Activated CD8-positive, alpha-beta T cell treated with anti-CD3 and anti-CD28 coated beads for 36 hours (primary cell): ENCODE measurements at regions of chr18 and their contacts with region 1.

Region 1: DNA sequence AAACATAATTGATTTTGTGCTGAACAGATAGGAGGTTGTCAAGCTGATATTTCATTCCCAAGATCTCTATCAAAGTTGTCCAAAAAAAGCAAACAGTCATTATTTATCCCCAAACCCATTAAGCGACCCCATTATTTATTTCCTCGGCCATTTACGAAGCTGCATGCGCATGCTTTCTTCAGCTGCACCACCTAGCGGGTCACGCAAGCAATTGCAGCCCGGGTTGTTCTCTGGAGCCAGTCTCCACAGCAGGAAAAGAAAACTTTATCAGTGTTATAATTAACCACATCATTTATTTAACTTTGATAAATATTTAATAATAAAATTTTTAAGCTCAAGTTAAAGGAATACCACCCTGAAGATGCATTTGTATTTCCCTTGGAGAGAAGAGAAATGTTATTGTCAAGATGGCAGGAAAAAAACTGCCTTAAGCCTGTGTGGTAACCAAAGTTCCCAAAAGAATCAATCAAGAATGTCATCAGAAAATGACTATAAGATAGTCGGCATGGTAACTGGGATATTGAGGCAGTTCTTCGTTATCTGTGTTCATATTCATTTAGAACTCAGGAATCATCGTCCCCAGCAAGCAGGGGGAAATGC is 304.7 kb downstream of the FBXO15 start:
- DNase-seq: peak; percentile 52
- ATAC-seq: peak; percentile 76
- H3K4me3 Mint-ChIP-seq: no peak overlapping the region
- H3K27ac Mint-ChIP-seq: no peak overlapping the region
- H3K4me1 Mint-ChIP-seq: no peaks in the 10 kb centered on the region
- H3K27me3 Mint-ChIP-seq: peaks cover 2% of the 10 kb centered on the region
- CTCF ChIP-seq: peak; percentile 97

Region 2: GRCh38 chr18:72762515-72763122 is 1080.3 kb before region 1 on chr18:
- CTCF ChIA-PET with region 1: interaction called, 6 read pairs
- POLR2A ChIA-PET with region 1: no interaction called
- intact Hi-C with region 1: loop called (anchors 5 kb)
- DNase-seq: no peak
- ATAC-seq: no peak
- H3K4me3 Mint-ChIP-seq: no peak overlapping the region
- H3K27ac Mint-ChIP-seq: no peak overlapping the region
- H3K4me1 Mint-ChIP-seq: no peaks in the 10 kb centered on the region
- H3K27me3 Mint-ChIP-seq: no peaks in the 10 kb centered on the region
- CTCF ChIP-seq: peak; percentile 68